CD8-positive, alpha-beta memory T cell (primary cell): ENCODE measurements at regions of chr17 and their contacts with region 1.

Region 1: GRCh38 chr17:74457146-74457819 is 9.2 kb upstream of the CD300A start:
- DNase-seq: peak; percentile 49 to 79 (median 63)
- H3K4me3 ChIP-seq: no peak overlapping the region
- H3K4me3 Mint-ChIP-seq: peak overlapping the region in 6 of 7 donors; percentile 8 to 61 (median 32)
- H3K27ac ChIP-seq: no peak overlapping the region
- H3K27ac Mint-ChIP-seq: peak overlapping the region in 4 of 8 donors; percentile 8 to 73 (median 62)
- H3K4me1 ChIP-seq: peaks cover 40% of the 10 kb centered on the region
- H3K4me1 Mint-ChIP-seq: peaks cover 51 to 62% (median 54%) of the 10 kb centered on the region in 3 donors
- H3K27me3 ChIP-seq: no peaks in the 10 kb centered on the region
- H3K27me3 Mint-ChIP-seq: peaks cover 0 to 3% of the 10 kb centered on the region in 2 donors

Region 2: GRCh38 chr17:74373838-74374606 is 83.3 kb before region 1 on chr17:
- CTCF ChIA-PET with region 1: interaction called, 88 read pairs
- POLR2A ChIA-PET with region 1: interaction called, 5 read pairs
- DNase-seq: no peak
- H3K4me3 ChIP-seq: no peak overlapping the region
- H3K4me3 Mint-ChIP-seq: no peak overlapping the region
- H3K27ac ChIP-seq: no peak overlapping the region
- H3K27ac Mint-ChIP-seq: no peak overlapping the region
- H3K4me1 ChIP-seq: peaks cover 12% of the 10 kb centered on the region
- H3K4me1 Mint-ChIP-seq: peaks cover 5 to 7% (median 6%) of the 10 kb centered on the region in 3 donors
- H3K27me3 ChIP-seq: no peaks in the 10 kb centered on the region
- H3K27me3 Mint-ChIP-seq: peaks cover 0 to 5% of the 10 kb centered on the region in 2 donors

Region 3: DNA sequence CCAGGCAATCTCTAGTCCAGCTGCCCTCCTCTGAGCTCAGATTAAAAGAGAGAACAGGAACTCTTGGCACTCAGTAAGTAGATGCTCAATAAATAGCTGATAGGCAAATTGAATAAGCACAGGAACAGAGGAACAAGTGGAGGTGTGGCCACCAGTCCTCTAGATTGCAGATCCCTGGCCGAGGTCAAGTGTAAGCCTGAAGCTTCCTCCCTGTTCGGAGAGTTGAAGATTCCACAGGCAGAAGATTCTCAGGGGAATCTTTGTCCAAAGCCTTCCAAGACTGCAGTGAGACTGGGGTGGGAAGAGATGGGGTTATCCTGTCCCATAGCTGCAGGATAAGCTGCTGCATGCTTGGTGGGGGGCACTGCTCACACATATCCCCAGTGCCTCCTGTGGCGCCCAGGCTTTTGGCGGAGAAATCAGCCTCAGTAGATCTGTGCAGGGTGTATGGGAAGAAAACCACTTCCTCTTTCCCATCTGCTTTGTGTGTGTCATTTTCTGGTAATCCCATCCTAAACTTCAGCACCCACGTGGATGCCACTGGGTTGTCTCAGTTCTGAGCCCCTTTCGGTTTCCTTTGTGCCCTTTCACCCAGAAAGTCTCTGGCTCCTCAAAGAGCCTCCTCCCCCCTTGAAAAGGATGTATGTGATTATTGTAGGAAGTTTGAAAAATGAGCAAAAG is 21.3 kb after region 1 on chr17:
- CTCF ChIA-PET with region 1: interaction called, 57 read pairs
- POLR2A ChIA-PET with region 1: interaction called, 6 read pairs
- DNase-seq: peak in 3 of 5 donors; percentile 8 to 54 (median 29)
- H3K4me3 ChIP-seq: peak overlapping the region; percentile 51
- H3K4me3 Mint-ChIP-seq: peak overlapping the region; percentile 12 to 83 (median 69)
- H3K27ac ChIP-seq: peak overlapping the region; percentile 25
- H3K27ac Mint-ChIP-seq: peak overlapping the region; percentile 80 to 97 (median 90)
- H3K4me1 ChIP-seq: peaks cover 56% of the 10 kb centered on the region
- H3K4me1 Mint-ChIP-seq: peaks cover 77 to 81% (median 79%) of the 10 kb centered on the region in 3 donors
- H3K27me3 ChIP-seq: no peaks in the 10 kb centered on the region
- H3K27me3 Mint-ChIP-seq: peaks cover 0 to 2% of the 10 kb centered on the region in 2 donors

Region 4: GRCh38 chr17:74493381-74493833 is 36.1 kb after region 1 on chr17:
- CTCF ChIA-PET with region 1: interaction called, 38 read pairs
- POLR2A ChIA-PET with region 1: no interaction called
- DNase-seq: peak; percentile 46 to 75 (median 59)
- H3K4me3 ChIP-seq: no peak overlapping the region
- H3K4me3 Mint-ChIP-seq: no peak overlapping the region
- H3K27ac ChIP-seq: no peak overlapping the region
- H3K27ac Mint-ChIP-seq: peak overlapping the region in 1 of 8 donors; percentile 33
- H3K4me1 ChIP-seq: no peaks in the 10 kb centered on the region
- H3K4me1 Mint-ChIP-seq: peaks cover 20 to 26% (median 23%) of the 10 kb centered on the region in 3 donors
- H3K27me3 ChIP-seq: no peaks in the 10 kb centered on the region
- H3K27me3 Mint-ChIP-seq: no peaks in the 10 kb centered on the region

Region 5: GRCh38 chr17:74528491-74529199 is 71.4 kb after region 1 on chr17:
- CTCF ChIA-PET with region 1: no interaction called
- POLR2A ChIA-PET with region 1: no interaction called
- DNase-seq: no peak
- H3K4me3 ChIP-seq: no peak overlapping the region
- H3K4me3 Mint-ChIP-seq: no peak overlapping the region
- H3K27ac ChIP-seq: no peak overlapping the region
- H3K27ac Mint-ChIP-seq: no peak overlapping the region
- H3K4me1 ChIP-seq: no peaks in the 10 kb centered on the region
- H3K4me1 Mint-ChIP-seq: peaks cover 3 to 5% (median 3%) of the 10 kb centered on the region in 3 donors
- H3K27me3 ChIP-seq: peaks cover 11% of the 10 kb centered on the region
- H3K27me3 Mint-ChIP-seq: peaks cover 28 to 81% of the 10 kb centered on the region in 2 donors

Region 6: GRCh38 chr17:74545843-74546230 is 88.6 kb after region 1 on chr17 and contains the start of gene CD300C:
- CTCF ChIA-PET with region 1: no interaction called
- POLR2A ChIA-PET with region 1: no interaction called
- DNase-seq: no peak
- H3K4me3 ChIP-seq: no peak within 1 kb of the TSS
- H3K4me3 Mint-ChIP-seq: peak within 1 kb of the TSS in 1 of 7 donors; percentile 23
- H3K27ac ChIP-seq: no peak within 1 kb of the TSS
- H3K27ac Mint-ChIP-seq: peak within 1 kb of the TSS in 1 of 8 donors; percentile 32
- H3K4me1 ChIP-seq: no peaks in the 10 kb centered on the region
- H3K4me1 Mint-ChIP-seq: peaks cover 0 to 4% (median 0%) of the 10 kb centered on the region in 3 donors
- H3K27me3 ChIP-seq: no peaks in the 10 kb centered on the region
- H3K27me3 Mint-ChIP-seq: peaks cover 7 to 24% of the 10 kb centered on the region in 2 donors
- total RNA-seq, gene CD300C: 0.20 TPM in 1 of 2 experiments, not detected in the other

Region 7: DNA sequence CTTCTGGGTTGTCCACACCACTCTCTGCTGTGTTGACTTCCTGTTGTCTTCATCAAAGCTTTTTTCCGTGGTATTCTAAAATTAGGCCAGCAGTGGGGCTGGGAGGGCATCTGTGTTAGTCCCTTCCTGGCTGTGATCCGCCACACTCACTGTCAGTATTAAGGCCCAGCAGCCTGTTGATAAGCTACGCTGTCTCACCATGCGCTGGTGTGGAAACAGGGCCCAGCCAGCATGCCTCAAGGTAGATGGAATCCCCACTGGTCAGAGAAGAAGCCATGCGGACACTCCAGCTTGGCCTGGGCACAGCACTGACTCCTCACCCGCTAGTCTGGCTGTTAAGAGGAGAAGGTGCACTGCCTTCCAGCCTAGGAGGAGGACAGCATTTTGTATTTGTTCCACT is 541.5 kb after region 1 on chr17:
- CTCF ChIA-PET with region 1: no interaction called
- POLR2A ChIA-PET with region 1: no interaction called
- DNase-seq: no peak
- H3K4me3 ChIP-seq: no peak overlapping the region
- H3K4me3 Mint-ChIP-seq: no peak overlapping the region
- H3K27ac ChIP-seq: no peak overlapping the region
- H3K27ac Mint-ChIP-seq: peak overlapping the region in 1 of 8 donors; percentile 37
- H3K4me1 ChIP-seq: no peaks in the 10 kb centered on the region
- H3K4me1 Mint-ChIP-seq: no peaks in the 10 kb centered on the region
- H3K27me3 ChIP-seq: no peaks in the 10 kb centered on the region
- H3K27me3 Mint-ChIP-seq: peaks cover 0 to 6% of the 10 kb centered on the region in 2 donors